Activated CD8-positive, alpha-beta T cell treated with anti-CD3 and anti-CD28 coated beads for 36 hours (primary cell): ENCODE measurements at regions of chr2 and their contacts with region 1.

Region 1: DNA sequence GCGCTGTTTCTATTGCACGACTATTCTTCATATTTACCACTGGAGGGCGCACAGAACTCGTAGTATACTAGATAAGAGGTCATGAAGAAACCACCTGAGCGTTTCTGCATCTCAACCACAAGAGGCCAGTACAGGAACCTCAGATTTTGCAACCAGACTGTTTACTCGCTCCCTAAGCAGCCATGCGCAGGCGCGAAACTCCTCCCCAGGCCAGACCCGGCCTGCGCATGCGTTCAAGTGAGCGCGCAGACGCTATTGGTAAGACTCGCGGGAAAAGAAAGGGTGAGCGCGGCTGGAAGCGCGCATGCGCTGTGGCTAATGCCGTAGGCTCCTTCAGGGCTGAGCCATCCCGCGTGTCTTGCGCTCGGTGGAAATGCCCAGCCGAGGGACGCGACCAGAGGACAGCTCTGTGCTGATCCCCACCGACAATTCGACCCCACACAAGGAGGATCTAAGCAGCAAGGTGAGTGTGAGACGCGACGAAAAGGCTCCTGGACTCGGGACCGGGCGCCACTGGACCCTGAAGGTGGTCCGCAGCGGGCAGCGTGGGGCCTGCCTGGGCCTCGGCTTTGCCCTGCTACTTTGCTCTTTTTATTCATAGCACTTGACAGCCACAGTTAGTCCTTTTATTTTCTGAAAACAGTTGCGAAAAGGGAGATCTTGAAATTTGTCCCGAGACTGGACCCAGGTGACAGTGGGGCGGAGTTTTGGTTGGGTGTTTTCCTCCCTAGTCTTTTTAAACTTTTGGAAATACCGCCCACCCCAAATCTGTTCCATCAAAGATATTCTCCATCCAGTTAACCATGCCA is at the start of gene ASNSD1:
- DNase-seq: peak; percentile 98
- ATAC-seq: peak; percentile 87
- H3K4me3 Mint-ChIP-seq: no peak within 1 kb of the TSS
- H3K27ac Mint-ChIP-seq: no peak within 1 kb of the TSS
- H3K4me1 Mint-ChIP-seq: peaks cover 54% of the 10 kb centered on the region
- H3K27me3 Mint-ChIP-seq: no peaks in the 10 kb centered on the region
- CTCF ChIP-seq: peak; percentile 85
- total RNA-seq, gene ASNSD1: 41.0 to 43.2 TPM

Region 2: DNA sequence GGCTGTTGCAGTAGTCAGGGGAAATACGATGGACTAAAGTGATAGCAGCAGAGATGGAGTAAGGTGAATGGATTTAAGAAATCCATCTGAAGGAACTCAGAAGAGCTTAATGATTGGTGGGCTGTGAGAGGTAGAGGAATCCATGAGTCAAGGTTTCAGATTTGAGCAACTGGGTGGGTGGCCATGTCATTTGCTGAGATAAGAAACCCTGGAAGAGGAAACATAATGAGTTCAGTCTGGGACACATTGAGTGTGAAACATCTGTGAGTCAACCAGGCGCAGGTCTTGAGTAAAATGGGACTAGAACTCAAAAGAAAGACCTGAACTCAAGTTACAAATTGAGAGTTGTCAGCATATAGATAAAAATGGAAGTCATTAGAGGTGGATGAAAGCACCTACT is 19.8 kb before region 1 on chr2:
- CTCF ChIA-PET with region 1: interaction called, 12 read pairs
- POLR2A ChIA-PET with region 1: no interaction called
- intact Hi-C with region 1: no loop called
- DNase-seq: peak; percentile 69
- ATAC-seq: peak; percentile 93
- H3K4me3 Mint-ChIP-seq: no peak overlapping the region
- H3K27ac Mint-ChIP-seq: peak overlapping the region; percentile 17
- H3K4me1 Mint-ChIP-seq: peaks cover 17% of the 10 kb centered on the region
- H3K27me3 Mint-ChIP-seq: no peaks in the 10 kb centered on the region
- CTCF ChIP-seq: no peak

Region 3: GRCh38 chr2:189674374-189675112 is 13.2 kb after region 1 on chr2 and contains the start of gene ANKAR:
- CTCF ChIA-PET with region 1: interaction called, 96 read pairs
- POLR2A ChIA-PET with region 1: interaction called, 14 read pairs
- intact Hi-C with region 1: loop called (anchors 2 kb)
- DNase-seq: peak; percentile 82
- ATAC-seq: peak; percentile 93
- H3K4me3 Mint-ChIP-seq: peak within 1 kb of the TSS; percentile 89
- H3K27ac Mint-ChIP-seq: peak within 1 kb of the TSS; percentile 96
- H3K4me1 Mint-ChIP-seq: peaks cover 28% of the 10 kb centered on the region
- H3K27me3 Mint-ChIP-seq: no peaks in the 10 kb centered on the region
- CTCF ChIP-seq: peak; percentile 76
- total RNA-seq, gene ANKAR: 3.5 to 3.6 TPM

Region 4: DNA sequence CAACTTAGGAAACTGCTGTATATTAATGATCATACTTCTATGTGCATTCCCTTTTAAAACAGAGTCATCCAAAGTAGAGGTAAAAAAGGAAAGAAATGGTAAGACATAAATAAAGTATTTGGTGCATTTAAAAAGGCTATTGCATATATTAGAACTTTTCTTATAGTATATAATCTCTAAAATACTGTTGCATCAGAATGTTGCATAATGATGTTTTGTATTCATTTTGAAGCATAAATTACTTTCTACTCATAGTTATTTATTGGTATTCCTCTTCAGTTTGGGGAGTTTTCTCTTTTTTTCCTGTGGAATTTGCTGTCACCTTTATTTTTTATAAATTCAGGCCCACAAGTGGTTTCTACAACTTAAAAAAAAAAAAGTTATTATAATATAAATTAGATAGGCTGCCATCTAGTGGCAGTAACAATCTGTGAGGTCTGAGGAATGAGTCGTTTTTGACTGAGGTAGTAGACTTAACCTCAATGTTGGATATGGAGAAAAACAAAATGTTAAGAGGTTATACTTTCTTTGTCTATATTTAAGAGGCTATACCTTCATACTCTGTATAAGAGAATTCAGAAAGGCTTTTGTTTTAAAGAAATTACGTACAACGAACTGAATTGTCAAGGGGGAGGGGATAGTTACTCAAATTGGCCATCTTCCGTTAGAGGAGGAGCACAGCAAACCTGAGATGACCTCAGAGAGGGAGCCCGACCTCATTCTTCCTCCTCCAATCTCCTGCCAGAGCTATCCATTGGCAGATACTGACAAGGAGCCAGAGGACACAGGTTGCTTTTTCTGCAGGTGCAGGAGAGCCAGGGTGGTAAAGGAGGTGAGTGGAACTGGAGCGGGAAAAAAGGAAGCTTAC is 36.9 kb after region 1 on chr2:
- CTCF ChIA-PET with region 1: interaction called, 78 read pairs
- POLR2A ChIA-PET with region 1: interaction called, 4 read pairs
- intact Hi-C with region 1: loop called (anchors 1 kb)
- DNase-seq: peak; percentile 58
- ATAC-seq: peak; percentile 55
- H3K4me3 Mint-ChIP-seq: no peak overlapping the region
- H3K27ac Mint-ChIP-seq: no peak overlapping the region
- H3K4me1 Mint-ChIP-seq: peaks cover 2% of the 10 kb centered on the region
- H3K27me3 Mint-ChIP-seq: no peaks in the 10 kb centered on the region
- CTCF ChIP-seq: peak; percentile 77

Region 5: DNA sequence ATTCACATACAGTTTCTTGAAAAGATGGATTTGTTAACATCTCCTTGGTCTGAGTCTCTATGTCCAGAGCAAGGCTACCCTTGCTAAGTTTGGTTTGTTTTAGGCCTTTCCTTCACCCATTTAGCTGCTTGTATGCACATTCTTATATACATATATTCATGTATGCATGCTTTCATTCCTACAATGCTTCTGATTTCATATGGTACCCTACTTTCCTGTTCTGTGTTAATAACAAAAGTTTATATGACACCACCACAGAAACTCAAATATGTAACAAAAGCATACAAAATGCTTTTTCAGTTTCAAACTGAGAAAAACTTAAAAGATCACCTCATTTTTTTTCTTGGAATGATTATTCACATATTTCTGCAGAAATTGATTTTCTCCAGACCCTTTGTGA is 61.8 kb after region 1 on chr2:
- CTCF ChIA-PET with region 1: interaction called, 10 read pairs
- POLR2A ChIA-PET with region 1: interaction called, 3 read pairs
- intact Hi-C with region 1: no loop called
- DNase-seq: no peak
- ATAC-seq: peak; percentile 60
- H3K4me3 Mint-ChIP-seq: no peak overlapping the region
- H3K27ac Mint-ChIP-seq: no peak overlapping the region
- H3K4me1 Mint-ChIP-seq: peaks cover 9% of the 10 kb centered on the region
- H3K27me3 Mint-ChIP-seq: no peaks in the 10 kb centered on the region
- CTCF ChIP-seq: no peak

Region 6: DNA sequence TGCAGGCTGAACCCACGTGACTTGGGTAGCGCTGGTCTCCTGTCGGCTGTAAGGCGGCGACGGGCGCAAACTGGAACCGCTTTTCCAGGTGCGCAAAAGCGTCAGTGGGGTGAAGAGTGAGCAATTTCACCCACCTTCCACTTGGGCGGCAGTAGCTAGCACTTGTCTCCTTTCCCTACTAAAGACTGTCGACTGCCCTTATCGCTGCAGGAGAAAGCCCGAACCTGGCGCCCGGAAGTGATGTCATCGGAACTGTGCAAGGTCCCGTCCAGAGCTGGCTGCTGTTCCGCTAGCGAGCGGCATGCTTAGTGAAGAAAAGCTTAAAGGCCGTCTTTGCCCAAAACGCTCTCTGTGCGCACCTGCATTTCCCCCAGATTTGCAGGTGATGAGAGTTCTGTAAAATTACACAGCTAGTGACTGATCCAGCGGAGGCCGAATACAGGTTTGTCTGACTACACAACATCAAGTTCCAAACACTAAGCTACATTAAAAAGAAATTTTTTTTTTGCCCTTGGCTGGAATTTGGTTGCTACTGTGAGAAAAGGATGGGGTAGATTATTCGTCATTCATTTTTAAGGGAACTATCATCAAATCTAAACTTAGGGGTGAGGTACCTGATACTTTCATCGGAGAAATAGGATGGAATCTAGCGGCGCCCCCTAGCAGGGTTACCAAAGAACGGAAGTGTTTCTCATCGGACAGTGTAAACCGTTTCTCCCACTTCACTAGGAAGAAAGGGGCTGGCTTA is 101.4 kb after region 1 on chr2 and contains the start of gene OSGEPL1:
- CTCF ChIA-PET with region 1: interaction called, 59 read pairs
- POLR2A ChIA-PET with region 1: interaction called, 14 read pairs
- intact Hi-C with region 1: loop called (anchors 2 kb)
- DNase-seq: peak; percentile 97
- ATAC-seq: peak; percentile 95
- H3K4me3 Mint-ChIP-seq: peak within 1 kb of the TSS; percentile 97
- H3K27ac Mint-ChIP-seq: peak within 1 kb of the TSS; percentile 99
- H3K4me1 Mint-ChIP-seq: peaks cover 12% of the 10 kb centered on the region
- H3K27me3 Mint-ChIP-seq: no peaks in the 10 kb centered on the region
- CTCF ChIP-seq: peak; percentile 51
- total RNA-seq, gene OSGEPL1: 14.7 to 16.2 TPM

Region 7: GRCh38 chr2:189783927-189784867 is 122.8 kb after region 1 on chr2 and contains the starts of genes ORMDL1 and PMS1:
- CTCF ChIA-PET with region 1: interaction called, 5 read pairs
- POLR2A ChIA-PET with region 1: interaction called, 10 read pairs
- intact Hi-C with region 1: no loop called
- DNase-seq: peak; percentile 95
- ATAC-seq: peak; percentile 92
- H3K4me3 Mint-ChIP-seq: peak within 1 kb of the TSS; percentile 97
- H3K27ac Mint-ChIP-seq: peak within 1 kb of the TSS; percentile 97
- H3K4me1 Mint-ChIP-seq: peaks cover 49% of the 10 kb centered on the region
- H3K27me3 Mint-ChIP-seq: no peaks in the 10 kb centered on the region
- CTCF ChIP-seq: no peak
- total RNA-seq, gene ORMDL1: 48.2 to 53.7 TPM
- total RNA-seq, gene PMS1: 44.3 to 58.5 TPM